Right cardiac atrium (tissue), 5 donors: ENCODE measurements at regions of chr5 and their contacts with region 1.

Region 1: GRCh38 chr5:148826053-148826738 is at the start of gene ADRB2:
- DNase-seq: peak; percentile 95 to 98 (median 97)
- ATAC-seq: peak; percentile 98 to 99
- H3K4me3 ChIP-seq: peak within 1 kb of the TSS; percentile 55
- H3K27ac ChIP-seq: peak within 1 kb of the TSS; percentile 96
- H3K4me1 ChIP-seq: no peaks in the 10 kb centered on the region
- H3K27me3 ChIP-seq: no peaks in the 10 kb centered on the region
- total RNA-seq, gene ADRB2: 5.0 to 9.2 (median 7.9) TPM

Region 2: GRCh38 chr5:148740966-148741742 is 85.0 kb before region 1 on chr5:
- intact Hi-C with region 1: loop called in 3 of 4 experiments (anchors 5 kb)
- DNase-seq: peak in 1 of 3 donors; percentile 55
- ATAC-seq: peak; percentile 60 to 70
- H3K4me3 ChIP-seq: no peak overlapping the region
- H3K27ac ChIP-seq: no peak overlapping the region
- H3K4me1 ChIP-seq: peaks cover 8% of the 10 kb centered on the region
- H3K27me3 ChIP-seq: no peaks in the 10 kb centered on the region

Region 3: GRCh38 chr5:148912714-148913398 is 86.7 kb after region 1 on chr5:
- intact Hi-C with region 1: no loop called
- DNase-seq: no peak
- ATAC-seq: peak in 1 of 2 donors; percentile 47
- H3K4me3 ChIP-seq: no peak overlapping the region
- H3K27ac ChIP-seq: no peak overlapping the region
- H3K4me1 ChIP-seq: peaks cover 12% of the 10 kb centered on the region
- H3K27me3 ChIP-seq: no peaks in the 10 kb centered on the region

Region 4: DNA sequence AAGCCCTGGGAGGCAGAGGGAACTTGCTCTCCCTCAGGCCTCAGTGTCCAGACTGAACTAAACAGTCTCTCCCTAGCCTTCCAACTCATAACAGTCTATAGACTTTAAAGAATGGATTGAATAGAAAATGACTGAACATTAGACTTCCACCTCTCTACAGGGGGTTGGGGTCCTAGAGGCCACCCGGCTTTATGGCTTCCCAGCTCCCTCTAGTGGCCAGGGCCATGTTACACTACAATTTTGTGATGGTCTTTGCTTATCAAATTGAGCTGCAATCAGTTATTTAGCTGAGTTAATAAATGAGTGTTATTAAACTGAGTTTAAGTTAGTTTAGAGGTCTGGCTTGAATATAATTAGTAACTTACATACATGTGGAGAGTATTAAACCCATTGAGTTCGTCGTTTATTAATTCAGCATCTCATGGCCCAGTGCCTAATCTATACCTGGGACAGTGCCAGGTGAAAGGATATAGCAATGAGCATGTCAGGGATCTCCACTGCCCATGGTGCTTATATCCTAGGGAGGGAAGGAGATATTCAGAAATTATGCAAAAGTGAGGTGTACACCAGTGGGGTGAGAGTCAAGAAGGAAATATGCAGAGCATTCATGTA is 131.5 kb after region 1 on chr5:
- intact Hi-C with region 1: loop called in 2 of 4 experiments (anchors 2 to 10 kb)
- DNase-seq: peak in 2 of 3 donors; percentile 24 to 60
- ATAC-seq: peak in 1 of 2 donors; percentile 27
- H3K4me3 ChIP-seq: no peak overlapping the region
- H3K27ac ChIP-seq: no peak overlapping the region
- H3K4me1 ChIP-seq: no peaks in the 10 kb centered on the region
- H3K27me3 ChIP-seq: no peaks in the 10 kb centered on the region

Region 5: GRCh38 chr5:149044453-149045088 is 218.4 kb after region 1 on chr5:
- intact Hi-C with region 1: loop called in 1 of 4 experiments (anchors 5 kb)
- DNase-seq: no peak
- ATAC-seq: no peak
- H3K4me3 ChIP-seq: no peak overlapping the region
- H3K27ac ChIP-seq: no peak overlapping the region
- H3K4me1 ChIP-seq: peaks cover 3% of the 10 kb centered on the region
- H3K27me3 ChIP-seq: no peaks in the 10 kb centered on the region

Region 6: DNA sequence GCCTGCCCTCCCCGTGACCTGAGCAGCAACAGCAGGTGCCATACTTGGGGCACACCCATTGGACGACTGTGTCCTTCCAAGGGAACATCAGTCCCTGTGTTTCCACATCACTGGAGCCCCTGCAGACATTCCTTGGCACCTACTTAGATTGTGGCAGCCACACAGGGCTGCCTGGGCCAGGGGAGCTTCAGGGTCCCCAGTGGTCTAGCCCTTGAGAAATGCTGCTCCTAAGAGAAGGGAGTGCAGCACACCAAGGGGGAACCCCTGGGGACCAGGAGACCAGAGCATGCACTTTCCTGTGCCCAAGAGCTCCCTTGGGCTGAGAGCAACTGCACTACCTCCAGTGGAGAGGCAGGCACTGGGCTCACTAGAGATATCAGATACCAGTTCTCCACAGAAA is 294.9 kb after region 1 on chr5:
- intact Hi-C with region 1: loop called in 2 of 4 experiments (anchors 5 to 10 kb)
- DNase-seq: no peak
- ATAC-seq: peak in 1 of 2 donors; percentile 37
- H3K4me3 ChIP-seq: no peak overlapping the region
- H3K27ac ChIP-seq: no peak overlapping the region
- H3K4me1 ChIP-seq: no peaks in the 10 kb centered on the region
- H3K27me3 ChIP-seq: no peaks in the 10 kb centered on the region